Psoas muscle (tissue), 8 donors: ENCODE measurements at regions of chr11 and their contacts with region 1.

Region 1: GRCh38 chr11:119334174-119334930 is at the start of gene RNF26:
- DNase-seq: peak; percentile 91 to 96
- ATAC-seq: peak; percentile 90 to 94 (median 90)
- H3K4me3 ChIP-seq: peak within 1 kb of the TSS; percentile 94
- H3K27ac ChIP-seq: peak within 1 kb of the TSS; percentile 95
- H3K4me1 ChIP-seq: peaks cover 41% of the 10 kb centered on the region
- H3K27me3 ChIP-seq: no peaks in the 10 kb centered on the region
- CTCF ChIP-seq: no peak
- total RNA-seq, gene RNF26: 6.1 to 8.8 (median 7.5) TPM

Region 2: DNA sequence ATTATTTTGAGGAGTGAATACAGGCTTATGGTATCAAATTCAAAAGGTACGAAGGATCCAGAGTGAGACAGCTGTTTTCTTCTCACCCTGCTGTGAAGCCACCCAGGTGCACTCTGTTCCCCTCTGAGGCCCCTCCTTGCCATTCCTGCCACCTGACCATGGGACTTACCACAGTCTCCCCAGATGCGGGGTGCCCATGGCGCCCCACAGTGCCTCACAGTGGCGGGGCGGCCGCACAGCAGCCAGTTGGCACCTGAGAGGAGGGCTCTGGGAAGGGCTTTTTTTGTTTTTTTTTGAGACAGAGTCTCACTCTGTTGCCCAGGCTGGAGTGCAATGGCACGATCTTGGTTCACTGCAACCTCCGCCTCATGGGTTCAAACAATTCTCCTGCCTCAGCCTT is 1855.0 kb before region 1 on chr11:
- intact Hi-C with region 1: no loop called
- DNase-seq: no peak
- ATAC-seq: no peak
- H3K4me3 ChIP-seq: no peak overlapping the region
- H3K27ac ChIP-seq: no peak overlapping the region
- H3K4me1 ChIP-seq: no peaks in the 10 kb centered on the region
- H3K27me3 ChIP-seq: peaks cover 0 to 7% (median 0%) of the 10 kb centered on the region in 3 donors
- CTCF ChIP-seq: no peak

Region 3: GRCh38 chr11:118895142-118896039 is 439.0 kb before region 1 on chr11:
- intact Hi-C with region 1: no loop called
- DNase-seq: peak in 1 of 2 donors; percentile 56
- ATAC-seq: no peak
- H3K4me3 ChIP-seq: no peak overlapping the region
- H3K27ac ChIP-seq: no peak overlapping the region
- H3K4me1 ChIP-seq: peaks cover 4% of the 10 kb centered on the region
- H3K27me3 ChIP-seq: no peaks in the 10 kb centered on the region
- CTCF ChIP-seq: no peak

Region 4: DNA sequence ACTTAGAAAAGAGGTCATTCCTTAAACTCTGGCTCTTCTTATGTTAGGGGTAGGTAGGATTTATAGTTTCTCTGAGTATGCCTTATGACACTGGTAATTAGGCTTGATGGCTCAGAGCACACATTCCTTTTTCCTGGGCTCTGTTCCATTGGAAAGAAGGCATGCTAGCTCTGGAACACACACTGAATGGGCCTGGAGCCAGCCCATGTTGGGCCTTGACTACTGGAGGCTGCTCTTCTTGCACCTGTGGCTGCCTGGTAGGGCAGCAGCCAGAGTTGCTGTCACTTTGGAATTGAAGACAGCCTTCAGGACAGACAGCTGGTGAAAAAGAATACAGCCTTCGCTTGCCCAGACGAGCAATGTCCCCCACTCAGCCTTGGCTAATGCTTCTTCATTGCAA is 35.6 kb before region 1 on chr11:
- intact Hi-C with region 1: loop called in 1 of 2 experiments (anchors 2 kb)
- DNase-seq: peak; percentile 78 to 94
- ATAC-seq: peak; percentile 92 to 94 (median 94)
- H3K4me3 ChIP-seq: peak overlapping the region; percentile 10
- H3K27ac ChIP-seq: peak overlapping the region; percentile 89
- H3K4me1 ChIP-seq: peaks cover 64% of the 10 kb centered on the region
- H3K27me3 ChIP-seq: no peaks in the 10 kb centered on the region
- CTCF ChIP-seq: no peak

Region 5: DNA sequence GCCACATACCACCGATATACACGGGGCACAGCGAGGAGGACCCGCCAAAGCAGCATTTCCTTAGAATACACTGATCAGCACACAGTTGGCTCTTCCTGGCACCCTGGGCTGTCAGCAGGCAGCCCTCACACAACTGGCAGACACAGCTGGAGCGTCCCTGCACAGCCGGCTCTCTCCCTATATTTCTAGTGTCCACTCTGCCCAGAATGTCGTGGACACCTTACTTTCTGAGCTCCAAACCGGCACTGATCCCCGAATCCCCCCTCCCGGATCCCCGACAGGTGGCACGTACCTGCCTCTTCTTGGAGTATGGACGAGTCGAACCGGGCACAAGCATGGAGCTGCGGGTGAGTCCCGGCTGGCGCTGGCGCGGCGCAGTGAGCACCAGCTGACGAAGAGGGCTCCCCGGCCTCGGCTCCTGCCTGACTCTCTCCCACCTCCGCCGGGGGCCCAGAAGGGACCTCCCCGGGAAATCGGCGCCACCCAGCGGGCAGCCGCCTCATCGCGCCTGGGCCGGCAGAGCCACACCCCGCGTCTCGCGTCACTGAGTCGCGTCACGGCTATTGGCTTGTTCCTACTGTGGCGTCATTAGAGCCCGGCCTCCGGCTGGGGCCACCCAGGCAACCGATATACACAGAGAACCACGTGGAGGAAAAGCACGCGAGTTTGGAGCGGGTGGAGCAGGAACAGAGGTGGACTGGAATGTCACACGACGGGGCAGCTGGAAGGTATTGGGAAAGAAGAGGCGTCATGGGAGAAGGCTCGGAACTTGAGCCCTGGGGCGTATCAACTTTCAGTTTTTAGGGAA is 47.0 kb after region 1 on chr11 and contains the start of gene USP2:
- intact Hi-C with region 1: no loop called
- DNase-seq: peak; percentile 96 to 98
- ATAC-seq: peak; percentile 81 to 84 (median 83)
- H3K4me3 ChIP-seq: peak within 1 kb of the TSS; percentile 84
- H3K27ac ChIP-seq: peak within 1 kb of the TSS; percentile 97
- H3K4me1 ChIP-seq: peaks cover 35% of the 10 kb centered on the region
- H3K27me3 ChIP-seq: no peaks in the 10 kb centered on the region
- CTCF ChIP-seq: peak; percentile 91
- total RNA-seq, gene USP2: 75.8 to 210 (median 156) TPM